Psoas muscle (tissue), 8 donors: ENCODE measurements at regions of chr5 and their contacts with region 1.

Region 1: DNA sequence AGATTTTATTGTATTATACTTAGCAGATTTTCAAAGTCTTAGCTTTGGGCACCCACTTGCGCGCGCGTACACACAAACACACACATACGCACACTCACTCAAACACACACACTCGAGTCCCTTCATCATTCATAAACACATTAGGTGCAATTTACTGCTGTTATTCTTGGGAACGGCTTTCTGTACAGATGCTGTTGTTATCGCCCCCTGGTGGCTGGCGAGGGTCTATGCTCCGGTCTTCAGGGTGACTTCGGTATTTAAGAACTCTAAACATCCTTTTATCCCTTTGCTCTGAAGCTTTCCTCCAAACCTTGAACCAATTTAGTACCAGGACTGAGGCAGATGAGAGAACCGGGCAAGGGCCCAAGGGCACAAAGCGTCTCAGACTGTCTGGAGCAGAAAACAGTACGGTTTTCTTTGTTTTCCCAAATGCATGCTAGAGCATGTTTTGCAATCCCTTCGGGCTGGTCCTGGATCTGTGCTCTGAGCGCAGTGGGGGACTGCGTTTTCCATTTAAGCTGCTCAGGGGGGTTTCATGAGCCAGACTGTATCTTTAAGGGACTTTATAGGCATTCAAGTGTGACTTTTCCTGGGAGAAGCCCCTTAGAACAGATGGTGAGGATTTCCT is 1.7 kb upstream of the SLIT3 start:
- DNase-seq: peak; percentile 67 to 75
- ATAC-seq: peak in 2 of 4 donors; percentile 41 to 70
- H3K4me3 ChIP-seq: no peak overlapping the region
- H3K27ac ChIP-seq: no peak overlapping the region
- H3K4me1 ChIP-seq: no peaks in the 10 kb centered on the region
- H3K27me3 ChIP-seq: peaks cover 0 to 49% (median 18%) of the 10 kb centered on the region in 3 donors
- CTCF ChIP-seq: peak; percentile 76

Region 2: DNA sequence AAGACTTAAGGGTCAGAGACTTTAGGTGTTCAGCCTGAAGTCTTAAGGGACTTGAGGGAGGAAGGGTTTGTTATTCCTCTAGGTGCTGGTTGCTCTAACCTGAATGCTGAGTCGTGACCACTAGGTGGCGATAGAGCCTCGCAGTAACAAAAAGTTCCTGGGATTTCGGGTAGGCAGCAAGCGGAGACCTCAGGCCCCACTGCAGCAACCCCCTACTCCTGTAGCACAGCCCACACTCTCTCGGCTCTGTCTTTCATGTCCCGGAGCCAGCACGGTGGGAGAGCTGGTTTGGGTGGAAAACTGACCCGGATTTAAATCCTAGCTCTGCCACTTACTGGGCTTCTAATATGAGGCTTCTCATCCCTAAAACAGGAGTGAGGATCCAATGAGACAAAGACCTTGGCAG is 623.1 kb before region 1 on chr5:
- intact Hi-C with region 1: loop called (anchors 5 kb)
- DNase-seq: peak; percentile 53 to 74
- ATAC-seq: peak in 3 of 4 donors; percentile 37 to 65 (median 63)
- H3K4me3 ChIP-seq: no peak overlapping the region
- H3K27ac ChIP-seq: no peak overlapping the region
- H3K4me1 ChIP-seq: no peaks in the 10 kb centered on the region
- H3K27me3 ChIP-seq: no peaks in the 10 kb centered on the region
- CTCF ChIP-seq: peak; percentile 85

Region 3: DNA sequence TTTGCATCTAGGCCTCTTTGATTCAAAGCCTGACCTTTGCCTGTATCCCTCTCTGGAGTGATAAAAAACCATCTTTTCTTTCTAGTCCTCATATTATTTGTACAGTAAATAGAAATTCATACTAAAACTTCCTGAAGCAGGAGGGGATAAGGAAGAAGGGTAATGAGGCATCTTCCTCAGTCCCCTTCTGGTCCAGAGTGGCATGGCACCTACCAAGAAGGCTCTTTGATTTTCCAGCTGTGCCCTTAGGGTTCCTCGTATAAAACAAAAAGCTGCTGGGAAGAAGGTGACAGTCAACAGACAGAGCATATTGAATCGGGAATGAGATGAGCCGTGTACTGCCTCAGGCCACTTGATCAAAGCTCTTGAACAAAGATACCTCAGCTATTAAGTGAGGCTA is 209.1 kb after region 1 on chr5:
- intact Hi-C with region 1: no loop called
- DNase-seq: no peak
- ATAC-seq: no peak
- H3K4me3 ChIP-seq: no peak overlapping the region
- H3K27ac ChIP-seq: no peak overlapping the region
- H3K4me1 ChIP-seq: no peaks in the 10 kb centered on the region
- H3K27me3 ChIP-seq: no peaks in the 10 kb centered on the region
- CTCF ChIP-seq: no peak

Region 4: GRCh38 chr5:169548315-169548714 is 245.7 kb after region 1 on chr5:
- intact Hi-C with region 1: loop called in 1 of 2 experiments (anchors 10 kb)
- DNase-seq: no peak
- ATAC-seq: no peak
- H3K4me3 ChIP-seq: no peak overlapping the region
- H3K27ac ChIP-seq: no peak overlapping the region
- H3K4me1 ChIP-seq: no peaks in the 10 kb centered on the region
- H3K27me3 ChIP-seq: peaks cover 0 to 3% (median 0%) of the 10 kb centered on the region in 3 donors
- CTCF ChIP-seq: no peak